Cardiac septum (tissue), 1 donor: ENCODE measurements at regions of chr22 and their contacts with region 1.

Region 1: GRCh38 chr22:17920145-17920605 is 104.2 kb downstream of the MICAL3 start:
- DNase-seq: peak; percentile 91

Region 2: GRCh38 chr22:17477391-17477833 is 442.8 kb before region 1 on chr22:
- intact Hi-C with region 1: no loop called
- DNase-seq: no peak

Region 3: GRCh38 chr22:17943533-17944249 is 23.5 kb after region 1 on chr22:
- intact Hi-C with region 1: loop called (anchors 1 kb)
- DNase-seq: no peak

Region 4: DNA sequence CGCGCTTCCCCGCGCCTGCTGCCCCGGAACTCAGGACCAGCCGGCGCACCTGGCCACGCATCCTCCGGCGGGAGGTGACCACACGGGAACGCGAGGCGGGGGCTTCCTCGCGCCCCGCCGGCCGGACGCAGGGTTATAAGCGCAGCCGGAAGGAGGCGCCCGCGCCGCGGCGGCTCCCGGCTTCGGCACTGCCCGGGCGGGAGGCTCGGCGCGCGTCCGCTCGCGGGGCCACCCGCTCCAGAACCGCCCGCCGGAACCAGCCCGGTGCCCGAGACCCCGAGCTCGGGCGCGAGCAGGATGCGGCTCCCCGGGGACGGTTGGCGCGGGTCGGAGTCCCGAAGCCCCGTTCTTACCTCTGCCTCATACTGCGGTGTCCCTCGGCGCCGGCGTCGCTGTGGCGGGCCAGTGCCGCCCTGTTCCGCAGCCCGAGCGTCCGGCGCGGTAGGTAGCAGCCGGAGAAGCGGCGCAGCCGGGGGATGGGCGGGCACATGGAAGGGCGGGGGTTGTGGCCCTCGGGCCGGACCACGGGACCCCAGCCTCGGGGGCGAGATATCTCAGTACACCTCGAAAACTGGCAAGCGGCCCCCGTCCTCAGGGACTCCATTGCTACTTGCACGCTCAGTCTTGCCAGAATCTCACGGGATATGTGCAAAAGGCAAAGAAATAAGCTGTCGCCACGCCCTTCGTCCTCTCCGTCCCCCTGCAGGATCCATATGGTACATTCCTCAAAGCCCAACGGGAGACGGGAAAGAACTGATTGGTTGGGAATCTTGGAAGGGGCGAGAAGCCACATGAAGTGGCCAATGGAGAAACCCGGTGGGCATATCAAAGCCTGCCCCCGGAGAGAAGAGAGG is 81.1 kb after region 1 on chr22:
- intact Hi-C with region 1: loop called (anchors 5 kb)
- DNase-seq: peak; percentile 93

Region 5: GRCh38 chr22:18110194-18110953 is 190.2 kb after region 1 on chr22 and contains the start of gene TUBA8:
- intact Hi-C with region 1: no loop called
- DNase-seq: peak; percentile 85
- total RNA-seq, gene TUBA8: 84.0 TPM